ENCODE measurements at regions of chr20 and their contacts with region 1.

Region 1: DNA sequence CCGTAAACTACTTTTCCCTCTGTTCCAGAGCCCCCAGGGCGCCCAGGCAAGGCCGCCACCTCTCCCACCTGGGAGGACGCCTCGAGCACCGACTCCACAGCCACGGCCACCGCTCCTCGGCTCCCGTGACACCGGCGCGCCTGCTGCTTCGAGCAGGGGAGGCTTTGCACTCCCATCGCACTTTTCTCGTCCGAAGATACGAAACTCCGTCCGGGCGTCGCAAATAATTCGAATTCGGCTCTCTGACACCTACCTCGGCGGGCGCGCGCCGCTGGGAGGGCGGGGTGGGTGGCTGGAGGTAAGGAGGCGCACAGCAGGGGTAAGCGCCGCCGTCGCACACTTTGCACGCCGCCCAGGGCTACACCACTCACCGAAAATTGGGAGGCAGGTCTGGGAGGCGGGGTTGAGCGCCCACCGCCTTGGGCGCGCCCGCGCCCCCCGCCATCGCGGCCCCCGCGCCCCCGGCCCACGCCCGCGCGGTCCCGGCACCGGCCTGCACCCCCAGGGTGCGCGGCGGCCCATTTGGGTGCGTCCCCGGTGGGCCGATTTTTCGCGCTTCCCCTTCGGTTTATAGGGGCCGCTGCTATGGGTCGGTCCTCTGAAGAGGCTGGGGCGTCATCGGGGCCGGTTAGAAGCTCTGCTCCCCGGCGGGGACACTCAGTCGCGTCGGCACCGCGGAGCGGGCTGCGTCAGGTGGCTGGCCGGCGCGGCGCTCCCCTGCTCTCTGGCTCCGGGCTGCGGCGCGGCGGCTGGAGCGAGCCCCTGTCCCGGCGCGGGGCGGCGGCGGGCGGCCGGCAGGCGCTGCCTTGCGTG is 36.2 kb downstream of the GNAS start:
- DNase-seq: peak; percentile 75 to 85 (median 76)
- H3K4me3 ChIP-seq: peak overlapping the region; percentile 77 to 94 (median 88)
- H3K4me3 Mint-ChIP-seq: peak overlapping the region; percentile 77 to 82
- H3K27ac ChIP-seq: peak overlapping the region in 1 of 2 donors; percentile 59
- H3K27ac Mint-ChIP-seq: peak overlapping the region in 4 of 7 donors; percentile 32 to 75 (median 58)
- H3K4me1 ChIP-seq: peaks cover 13 to 28% of the 10 kb centered on the region in 2 donors
- H3K4me1 Mint-ChIP-seq: peaks cover 15% of the 10 kb centered on the region
- H3K27me3 ChIP-seq: no peaks in the 10 kb centered on the region
- H3K27me3 Mint-ChIP-seq: peaks cover 2 to 7% (median 3%) of the 10 kb centered on the region in 3 donors
- CTCF ChIP-seq: no peak

Region 2: DNA sequence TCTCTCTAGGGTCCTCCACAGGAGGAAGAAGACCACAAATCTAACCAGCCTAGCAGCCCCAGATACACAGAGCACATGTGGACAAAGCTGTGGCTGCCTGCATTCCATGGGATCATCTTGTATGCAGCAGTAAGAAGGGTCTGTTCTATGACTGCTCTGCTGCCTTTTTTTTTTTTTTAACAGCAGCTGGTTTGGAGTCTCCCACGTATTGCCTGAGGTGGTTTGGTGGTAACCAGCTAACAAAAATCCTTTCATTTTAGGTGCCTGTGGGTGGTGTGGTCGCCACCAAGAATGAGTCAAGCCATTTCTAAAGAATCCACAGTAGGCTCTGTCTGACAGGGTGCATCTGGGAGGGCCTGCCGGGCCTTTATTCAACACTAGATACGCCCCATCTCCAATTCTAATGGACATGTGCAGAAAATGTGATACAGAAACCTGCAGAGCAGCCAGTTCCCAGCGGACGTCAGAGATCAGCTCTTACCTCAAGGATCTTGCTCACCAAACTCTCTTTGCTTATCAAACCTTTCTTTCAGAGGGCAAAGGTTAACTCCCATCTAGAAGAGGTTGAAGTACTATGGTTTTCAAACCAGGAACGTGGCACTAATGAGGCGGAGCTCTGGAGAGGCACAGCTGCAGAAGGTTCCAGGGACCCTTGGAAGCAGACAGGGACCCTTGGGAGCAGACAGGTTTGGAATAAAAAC is 70.0 kb before region 1 on chr20:
- intact Hi-C with region 1: no loop called
- DNase-seq: no peak
- H3K4me3 ChIP-seq: no peak overlapping the region
- H3K4me3 Mint-ChIP-seq: no peak overlapping the region
- H3K27ac ChIP-seq: no peak overlapping the region
- H3K27ac Mint-ChIP-seq: no peak overlapping the region
- H3K4me1 ChIP-seq: no peaks in the 10 kb centered on the region
- H3K4me1 Mint-ChIP-seq: no peaks in the 10 kb centered on the region
- H3K27me3 ChIP-seq: no peaks in the 10 kb centered on the region
- H3K27me3 Mint-ChIP-seq: peaks cover 2 to 16% (median 10%) of the 10 kb centered on the region in 3 donors
- CTCF ChIP-seq: no peak

Region 3: DNA sequence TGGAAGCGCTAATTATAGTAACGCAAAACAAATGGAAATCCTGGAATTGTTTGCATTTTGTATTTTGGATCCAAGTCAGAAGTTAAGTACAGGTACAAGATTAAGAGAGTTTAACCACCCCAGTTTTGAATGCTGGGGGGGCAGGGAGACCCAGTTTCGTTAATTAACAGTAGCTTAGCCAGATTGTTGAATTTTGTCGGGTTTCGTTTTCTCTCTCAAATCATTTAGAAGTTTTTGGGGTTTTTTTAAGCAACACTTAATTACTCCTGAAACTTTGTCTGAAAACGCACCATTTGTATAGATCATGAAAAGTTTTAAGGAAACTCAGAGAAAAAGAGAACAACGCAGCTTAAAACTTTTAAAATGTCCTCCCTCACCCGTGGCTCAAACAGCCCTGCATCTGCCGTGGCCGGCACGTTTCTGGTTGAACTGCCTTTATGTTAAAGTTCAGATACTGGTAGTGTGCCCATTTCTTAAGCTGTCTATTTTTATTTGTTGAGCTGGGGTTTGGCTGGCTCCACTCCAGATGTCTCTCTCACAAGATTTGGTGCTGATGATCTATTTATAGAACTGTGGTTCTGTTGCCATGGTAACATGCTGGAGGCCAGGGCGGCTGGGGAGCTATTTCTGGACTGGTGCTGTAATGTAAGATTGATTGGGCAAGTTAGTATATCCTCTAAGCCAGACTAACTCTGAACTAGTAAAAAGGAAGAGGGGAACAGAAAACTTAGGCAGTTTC is 18.8 kb after region 1 on chr20:
- intact Hi-C with region 1: loop called in 1 of 2 experiments (anchors 1 kb)
- DNase-seq: peak; percentile 90 to 97 (median 93)
- H3K4me3 ChIP-seq: peak overlapping the region; percentile 36 to 76 (median 65)
- H3K4me3 Mint-ChIP-seq: peak overlapping the region; percentile 88 to 96
- H3K27ac ChIP-seq: peak overlapping the region; percentile 89 to 91
- H3K27ac Mint-ChIP-seq: peak overlapping the region; percentile 96 to 100 (median 99)
- H3K4me1 ChIP-seq: peaks cover 28 to 32% of the 10 kb centered on the region in 2 donors
- H3K4me1 Mint-ChIP-seq: peaks cover 40% of the 10 kb centered on the region
- H3K27me3 ChIP-seq: no peaks in the 10 kb centered on the region
- H3K27me3 Mint-ChIP-seq: peaks cover 0 to 3% (median 0%) of the 10 kb centered on the region in 3 donors
- CTCF ChIP-seq: no peak

Region 4: DNA sequence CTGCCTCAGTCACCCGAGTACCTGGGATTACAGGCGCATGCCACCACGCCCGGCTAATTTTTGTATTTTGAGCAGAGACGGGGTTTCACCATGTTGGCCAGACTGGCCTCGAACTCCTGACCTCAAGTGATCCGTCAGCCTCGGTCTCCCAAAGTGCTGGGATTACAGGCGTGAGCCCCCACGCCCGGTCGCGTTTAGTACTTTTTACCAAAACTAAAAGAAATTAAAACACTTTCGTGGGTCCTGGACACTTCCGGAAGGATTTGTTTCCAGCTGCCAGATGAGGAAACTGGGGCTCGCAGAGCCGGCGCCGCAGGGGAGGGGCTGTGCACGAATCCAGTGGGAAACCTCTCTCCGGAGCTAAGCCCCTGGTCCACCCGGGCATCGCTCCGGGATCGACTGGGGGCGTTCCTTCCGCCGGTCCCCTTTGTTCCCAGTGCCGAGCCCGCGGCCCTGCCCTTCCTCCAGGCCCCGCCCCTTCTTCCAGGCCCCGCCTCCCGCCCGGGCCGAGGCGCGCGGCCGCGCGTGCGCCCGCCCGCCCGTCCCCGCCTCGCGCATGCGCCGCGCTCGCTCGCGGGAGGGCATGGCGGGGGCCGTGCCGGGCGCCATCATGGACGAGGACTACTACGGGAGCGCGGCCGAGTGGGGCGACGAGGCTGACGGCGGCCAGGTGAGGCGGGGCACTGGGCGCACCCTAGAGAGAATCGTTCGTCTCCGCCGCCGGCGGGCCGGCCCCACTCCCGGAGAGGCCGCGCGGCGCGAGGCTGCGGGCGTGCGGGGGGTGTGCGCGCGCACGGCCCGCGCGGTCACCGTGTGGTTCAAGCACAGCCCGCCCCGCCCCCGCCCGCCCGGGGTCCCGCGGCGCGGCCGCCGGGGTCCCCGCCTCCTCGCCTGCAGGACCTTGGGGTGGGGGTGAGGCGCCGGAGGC is 92.2 kb after region 1 on chr20 and contains the start of gene NELFCD:
- intact Hi-C with region 1: loop called (anchors 5 kb)
- DNase-seq: peak; percentile 65 to 78 (median 77)
- H3K4me3 ChIP-seq: peak within 1 kb of the TSS; percentile 67 to 92 (median 86)
- H3K4me3 Mint-ChIP-seq: peak within 1 kb of the TSS; percentile 80 to 92
- H3K27ac ChIP-seq: peak within 1 kb of the TSS; percentile 46 to 80
- H3K27ac Mint-ChIP-seq: peak within 1 kb of the TSS; percentile 75 to 90 (median 82)
- H3K4me1 ChIP-seq: peaks cover 20 to 32% of the 10 kb centered on the region in 2 donors
- H3K4me1 Mint-ChIP-seq: peaks cover 31% of the 10 kb centered on the region
- H3K27me3 ChIP-seq: no peaks in the 10 kb centered on the region
- H3K27me3 Mint-ChIP-seq: peaks cover 0 to 4% (median 1%) of the 10 kb centered on the region in 3 donors
- CTCF ChIP-seq: no peak
- polyA plus RNA-seq, gene NELFCD: 49.0 to 74.8 (median 50.1) TPM

Region 5: GRCh38 chr20:59032023-59032712 is 143.4 kb after region 1 on chr20 and contains the start of gene ATP5F1E:
- intact Hi-C with region 1: loop called (anchors 5 to 10 kb)
- DNase-seq: peak; percentile 94 to 95 (median 94)
- H3K4me3 ChIP-seq: peak within 1 kb of the TSS; percentile 53 to 83 (median 79)
- H3K4me3 Mint-ChIP-seq: peak within 1 kb of the TSS; percentile 94 to 97
- H3K27ac ChIP-seq: peak within 1 kb of the TSS; percentile 78 to 88
- H3K27ac Mint-ChIP-seq: peak within 1 kb of the TSS; percentile 94 to 99 (median 97)
- H3K4me1 ChIP-seq: peaks cover 23 to 41% of the 10 kb centered on the region in 2 donors
- H3K4me1 Mint-ChIP-seq: peaks cover 44% of the 10 kb centered on the region
- H3K27me3 ChIP-seq: no peaks in the 10 kb centered on the region
- H3K27me3 Mint-ChIP-seq: peaks cover 0 to 2% (median 0%) of the 10 kb centered on the region in 3 donors
- CTCF ChIP-seq: no peak
- polyA plus RNA-seq, gene ATP5F1E: 39.0 to 105 (median 102) TPM